ENCODE measurements at regions of chr17 and their contacts with region 1.

Region 1: DNA sequence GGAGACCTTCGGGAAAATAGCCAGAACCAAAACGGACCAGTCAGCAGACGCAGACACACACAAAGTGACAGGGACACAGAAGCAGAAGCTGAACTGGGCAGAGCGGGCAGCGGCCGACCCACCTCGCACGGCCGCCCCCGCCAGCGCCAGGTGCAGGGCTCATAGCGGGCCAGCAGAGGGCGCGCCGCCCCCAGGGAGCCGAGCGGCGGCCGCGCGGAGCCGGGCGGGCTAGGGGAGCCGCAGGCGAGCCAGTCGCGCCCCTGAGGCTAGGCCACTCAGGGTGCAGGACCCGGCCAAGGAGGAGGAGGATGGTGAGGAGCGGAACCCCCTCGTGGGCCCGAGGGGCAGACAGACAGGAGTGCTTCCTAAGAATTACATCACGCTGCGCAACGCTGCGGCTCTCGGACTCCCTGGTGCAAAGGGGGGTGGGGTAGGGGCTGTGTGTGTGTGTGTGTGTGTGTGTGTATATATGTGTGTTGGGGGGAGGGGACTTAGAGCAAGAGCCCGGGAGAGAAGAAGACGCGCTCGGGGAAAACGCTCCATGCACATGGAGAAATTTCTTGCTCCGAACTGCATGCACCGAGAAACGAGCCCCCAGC is 913 bp upstream of the NOG start:
- DNase-seq: peak; percentile 19 to 91 (median 55)
- ATAC-seq: peak; percentile 69 to 88 (median 81)
- H3K4me3 ChIP-seq: peak overlapping the region; percentile 34 to 65 (median 48)
- H3K27ac ChIP-seq: no peak overlapping the region
- H3K4me1 ChIP-seq: peaks cover 5 to 21% (median 10%) of the 10 kb centered on the region in 3 donors
- H3K27me3 ChIP-seq: peaks cover 0 to 5% (median 0%) of the 10 kb centered on the region in 4 donors
- CTCF ChIP-seq: peak; percentile 93 to 97 (median 94)

Region 2: GRCh38 chr17:56715613-56716357 is 123.2 kb after region 1 on chr17:
- intact Hi-C with region 1: loop called in 2 of 3 experiments (anchors 5 kb)
- DNase-seq: peak; percentile 43 to 86 (median 73)
- ATAC-seq: peak; percentile 87 to 99 (median 96)
- H3K4me3 ChIP-seq: no peak overlapping the region
- H3K27ac ChIP-seq: no peak overlapping the region
- H3K4me1 ChIP-seq: no peaks in the 10 kb centered on the region
- H3K27me3 ChIP-seq: no peaks in the 10 kb centered on the region
- CTCF ChIP-seq: peak; percentile 65 to 81 (median 78)

Region 3: GRCh38 chr17:56779898-56780733 is 187.5 kb after region 1 on chr17:
- intact Hi-C with region 1: loop called in 1 of 3 experiments (anchors 5 kb)
- DNase-seq: peak; percentile 52 to 96 (median 74)
- ATAC-seq: peak; percentile 97 to 100 (median 99)
- H3K4me3 ChIP-seq: peak overlapping the region in 2 of 4 donors; percentile 22 to 34
- H3K27ac ChIP-seq: no peak overlapping the region
- H3K4me1 ChIP-seq: no peaks in the 10 kb centered on the region
- H3K27me3 ChIP-seq: no peaks in the 10 kb centered on the region
- CTCF ChIP-seq: peak; percentile 96 to 100 (median 100)